Activated CD8-positive, alpha-beta T cell treated with anti-CD3 and anti-CD28 coated beads, Interleukin-2, amount 10 ng/mL, durations not matched to agents 7 days and 5 days (primary cell): ENCODE measurements at regions of chr1 and their contacts with region 1.

Region 1: DNA sequence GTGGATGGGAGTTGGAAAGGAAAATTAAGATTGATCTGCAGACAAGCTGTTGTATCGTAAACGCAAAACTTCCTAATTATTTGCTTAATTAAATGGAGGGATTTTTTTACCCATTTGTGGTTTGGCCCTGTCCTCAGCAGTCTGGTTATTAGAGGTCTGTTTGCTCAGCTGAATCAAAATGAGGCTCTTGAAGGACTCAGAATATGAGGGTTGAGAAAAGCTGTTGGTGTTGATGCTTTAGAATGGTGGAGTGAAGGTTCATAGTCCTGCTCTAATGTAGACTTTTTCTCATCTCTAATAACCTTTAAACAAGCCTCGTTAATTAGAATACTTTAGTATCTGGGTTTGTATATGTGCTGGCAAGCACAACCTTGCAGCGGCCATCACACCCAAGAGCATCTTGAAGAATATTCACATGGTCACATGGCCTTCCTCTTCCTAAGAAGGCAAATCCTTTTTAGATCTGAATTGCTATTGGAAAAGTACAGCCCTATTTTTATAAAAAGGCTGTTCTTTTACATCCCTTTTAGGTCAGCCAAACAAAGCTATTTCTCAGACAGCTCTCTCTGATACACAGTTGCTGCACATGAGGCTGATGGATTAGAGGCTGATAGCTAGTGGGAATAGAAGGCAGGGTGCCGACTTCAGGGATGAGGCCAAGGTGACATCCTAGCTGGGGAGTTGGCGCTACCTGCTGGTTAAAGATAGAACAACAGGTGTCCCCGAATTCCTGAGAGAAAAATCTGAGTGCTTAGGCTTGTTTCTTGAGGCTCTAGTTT is 53.8 kb downstream of the MACF1 start:
- DNase-seq: peak; percentile 69
- ATAC-seq: peak; percentile 57
- H3K4me3 Mint-ChIP-seq: no peak overlapping the region
- H3K27ac Mint-ChIP-seq: no peak overlapping the region
- H3K4me1 Mint-ChIP-seq: peaks cover 27% of the 10 kb centered on the region
- H3K27me3 Mint-ChIP-seq: no peaks in the 10 kb centered on the region

Region 2: GRCh38 chr1:39163469-39163868 is 94.9 kb before region 1 on chr1:
- CTCF ChIA-PET with region 1: no interaction called
- POLR2A ChIA-PET with region 1: no interaction called
- DNase-seq: no peak
- ATAC-seq: no peak
- H3K4me3 Mint-ChIP-seq: no peak overlapping the region
- H3K27ac Mint-ChIP-seq: no peak overlapping the region
- H3K4me1 Mint-ChIP-seq: peaks cover 2% of the 10 kb centered on the region
- H3K27me3 Mint-ChIP-seq: peaks cover 6% of the 10 kb centered on the region

Region 3: DNA sequence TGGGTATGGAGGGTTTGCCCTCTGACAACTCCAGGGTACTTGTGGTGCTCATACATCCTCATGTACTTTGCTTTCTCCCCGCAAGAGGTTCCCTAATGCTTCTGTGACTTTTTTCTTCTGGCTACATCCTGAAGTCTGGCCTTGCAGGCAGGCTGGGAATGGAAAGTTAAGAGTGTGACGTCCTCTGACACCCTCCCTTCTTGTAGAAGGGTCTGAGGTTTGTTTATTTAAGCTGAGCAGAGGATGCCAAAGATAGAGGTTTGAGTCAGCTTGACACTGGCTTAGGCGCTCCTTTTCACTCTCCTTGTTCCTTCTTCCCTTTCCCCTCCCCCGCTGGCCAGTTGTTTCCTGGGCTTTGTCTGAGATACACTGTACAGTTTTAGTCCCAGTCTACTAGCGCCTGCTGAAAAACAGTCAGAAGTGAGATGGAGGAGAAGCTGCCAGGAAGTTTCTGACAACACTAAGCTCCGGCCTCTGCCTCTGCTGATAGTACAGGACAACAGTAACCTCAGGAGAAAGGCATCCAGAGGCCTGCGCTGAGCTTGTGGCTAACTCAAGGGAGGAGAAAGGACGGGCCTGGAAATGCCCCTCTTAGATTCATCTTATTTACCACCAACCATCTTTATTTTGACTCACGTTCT is 53.8 kb before region 1 on chr1 and contains the start of gene MACF1:
- CTCF ChIA-PET with region 1: interaction called, 36 read pairs
- POLR2A ChIA-PET with region 1: interaction called, 14 read pairs
- DNase-seq: peak; percentile 58
- ATAC-seq: peak; percentile 61
- H3K4me3 Mint-ChIP-seq: peak within 1 kb of the TSS; percentile 93
- H3K27ac Mint-ChIP-seq: peak within 1 kb of the TSS; percentile 93
- H3K4me1 Mint-ChIP-seq: peaks cover 53% of the 10 kb centered on the region
- H3K27me3 Mint-ChIP-seq: no peaks in the 10 kb centered on the region
- total RNA-seq, gene MACF1: 353 to 366 TPM

Region 4: DNA sequence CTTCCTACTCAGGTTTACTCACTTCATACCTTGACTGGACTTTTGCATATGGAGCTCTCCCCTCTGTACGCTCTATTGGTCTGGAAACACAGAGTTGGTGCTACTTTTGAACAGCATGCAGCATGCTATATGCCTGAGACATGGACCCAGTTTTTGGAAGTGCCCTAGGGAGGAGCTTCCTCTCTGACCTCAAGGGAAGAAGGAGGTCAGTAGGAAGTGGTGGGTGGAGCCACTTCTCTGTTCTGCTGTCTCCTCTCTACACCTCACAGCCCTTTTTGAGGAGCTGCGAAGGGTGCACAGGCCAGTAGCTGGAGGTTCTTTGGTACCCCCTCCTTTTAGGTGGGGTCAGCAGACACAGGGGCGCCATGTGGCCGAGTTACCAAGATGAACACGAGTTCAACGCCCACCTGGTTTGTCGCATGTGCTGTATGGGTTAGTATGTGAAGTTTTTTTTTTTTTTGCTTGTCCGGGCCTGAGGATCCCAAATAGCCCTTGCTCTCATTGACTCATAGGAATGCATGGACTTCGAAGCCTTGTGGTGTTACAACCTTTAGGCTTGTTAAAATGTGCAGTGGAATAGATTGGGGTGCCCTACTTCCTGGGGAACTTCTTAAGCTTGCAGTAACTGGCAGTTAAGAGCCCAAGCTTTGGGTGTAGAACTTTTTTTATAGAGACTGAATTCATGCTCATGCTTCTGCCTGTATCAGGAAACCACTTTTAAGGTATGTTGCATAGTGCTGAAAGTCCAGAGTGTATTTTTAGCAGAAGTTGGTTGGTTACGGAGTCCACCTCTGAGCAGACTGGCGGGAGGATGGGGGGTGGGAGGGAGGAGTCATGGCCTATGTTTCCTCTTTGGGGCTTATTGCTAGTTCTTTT is 43.1 kb before region 1 on chr1:
- CTCF ChIA-PET with region 1: interaction called, 51 read pairs
- POLR2A ChIA-PET with region 1: interaction called, 4 read pairs
- DNase-seq: peak; percentile 69
- ATAC-seq: peak; percentile 78
- H3K4me3 Mint-ChIP-seq: peak overlapping the region; percentile 89
- H3K27ac Mint-ChIP-seq: peak overlapping the region; percentile 90
- H3K4me1 Mint-ChIP-seq: peaks cover 51% of the 10 kb centered on the region
- H3K27me3 Mint-ChIP-seq: no peaks in the 10 kb centered on the region

Region 5: DNA sequence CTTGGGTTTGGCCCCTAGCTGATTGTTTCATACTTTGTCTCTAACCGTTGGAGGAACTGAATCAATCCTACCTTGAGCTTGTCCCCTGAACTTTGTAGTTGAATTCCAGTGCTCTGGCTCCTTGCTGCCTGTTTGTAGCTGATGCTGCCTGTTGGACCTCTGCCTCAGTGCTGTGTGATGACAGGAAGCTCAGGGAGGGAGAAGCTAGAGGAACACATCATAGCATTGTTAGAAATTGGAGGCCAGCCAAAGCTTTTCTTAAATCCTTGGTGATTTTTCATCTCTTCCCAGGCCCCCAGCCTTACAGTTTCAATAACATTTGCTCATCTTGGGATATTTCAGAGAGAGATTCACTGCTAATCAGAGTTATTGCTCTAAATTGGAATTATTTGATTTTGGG is 19.9 kb before region 1 on chr1:
- CTCF ChIA-PET with region 1: interaction called, 18 read pairs
- POLR2A ChIA-PET with region 1: no interaction called
- DNase-seq: no peak
- ATAC-seq: no peak
- H3K4me3 Mint-ChIP-seq: no peak overlapping the region
- H3K27ac Mint-ChIP-seq: peak overlapping the region; percentile 75
- H3K4me1 Mint-ChIP-seq: peaks cover 8% of the 10 kb centered on the region
- H3K27me3 Mint-ChIP-seq: no peaks in the 10 kb centered on the region

Region 6: GRCh38 chr1:39326832-39327231 is 68.5 kb after region 1 on chr1:
- CTCF ChIA-PET with region 1: no interaction called
- POLR2A ChIA-PET with region 1: no interaction called
- DNase-seq: no peak
- ATAC-seq: no peak
- H3K4me3 Mint-ChIP-seq: no peak overlapping the region
- H3K27ac Mint-ChIP-seq: peak overlapping the region; percentile 0
- H3K4me1 Mint-ChIP-seq: peaks cover 22% of the 10 kb centered on the region
- H3K27me3 Mint-ChIP-seq: no peaks in the 10 kb centered on the region